ENCODE measurements at regions of chr6 and their contacts with region 1.

Region 1: DNA sequence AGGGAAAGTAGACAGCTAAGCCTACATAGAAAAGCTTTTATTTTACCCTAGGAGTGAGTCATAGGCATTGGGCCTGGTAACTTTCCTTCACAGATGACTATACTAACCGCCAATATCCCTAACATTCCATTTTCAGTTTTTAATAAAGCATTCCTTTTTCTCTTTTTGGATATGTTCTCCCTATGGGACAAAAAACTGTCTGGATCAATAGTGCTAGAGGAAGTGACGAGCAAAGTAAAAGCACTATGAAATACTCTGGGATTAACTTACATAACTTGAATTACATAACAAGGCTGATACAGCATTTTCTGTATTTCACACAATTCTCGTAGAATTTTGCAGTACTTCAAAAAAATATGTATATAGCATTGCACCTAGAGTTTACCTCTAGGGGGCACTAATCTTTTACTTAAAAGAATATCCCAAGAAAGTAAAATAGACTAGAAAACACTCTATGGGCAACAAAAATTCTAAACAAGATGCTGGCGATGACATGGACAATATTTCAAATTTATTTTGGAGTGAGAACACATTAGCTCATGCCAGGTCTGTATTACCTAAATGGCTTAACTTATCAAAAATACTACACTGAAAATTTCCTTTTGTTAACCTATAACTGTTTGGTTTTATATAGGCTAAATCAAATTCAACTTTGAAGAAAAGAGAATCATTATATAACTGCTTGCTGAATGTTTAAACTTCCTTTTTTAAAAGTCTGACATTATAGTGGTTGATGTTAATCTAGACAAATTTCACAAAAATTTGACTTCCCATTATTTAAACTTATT is 66.3 kb upstream of the DST start:
- DNase-seq: peak; percentile 59
- H3K4me3 Mint-ChIP-seq: peak overlapping the region; percentile 45
- H3K27ac Mint-ChIP-seq: peak overlapping the region; percentile 53
- H3K4me1 Mint-ChIP-seq: peaks cover 31% of the 10 kb centered on the region
- H3K27me3 Mint-ChIP-seq: no peaks in the 10 kb centered on the region
- CTCF ChIP-seq: peak; percentile 24

Region 2: DNA sequence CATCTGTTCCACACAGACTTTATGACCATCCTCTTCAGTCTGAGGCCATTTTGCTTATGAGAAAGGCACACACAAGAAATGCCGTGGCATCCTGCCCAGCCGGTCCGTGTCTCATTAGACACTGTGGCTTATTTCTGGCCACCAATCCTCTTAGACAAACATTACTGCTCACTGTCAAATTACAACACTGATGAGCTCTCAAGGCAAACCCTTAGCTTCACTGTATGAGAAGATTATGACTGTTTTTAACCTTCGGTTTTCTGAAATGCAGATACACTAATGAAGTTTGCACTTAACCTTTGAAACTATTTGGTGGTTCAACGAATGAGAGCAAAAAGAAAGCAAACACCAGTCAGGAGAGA is 15.8 kb before region 1 on chr6:
- CTCF ChIA-PET with region 1: interaction called, 15 read pairs
- POLR2A ChIA-PET with region 1: interaction called, 20 read pairs
- intact Hi-C with region 1: no loop called
- DNase-seq: peak; percentile 91
- H3K4me3 Mint-ChIP-seq: peak overlapping the region; percentile 77
- H3K27ac Mint-ChIP-seq: peak overlapping the region; percentile 97
- H3K4me1 Mint-ChIP-seq: peaks cover 51% of the 10 kb centered on the region
- H3K27me3 Mint-ChIP-seq: no peaks in the 10 kb centered on the region
- CTCF ChIP-seq: no peak

Region 3: DNA sequence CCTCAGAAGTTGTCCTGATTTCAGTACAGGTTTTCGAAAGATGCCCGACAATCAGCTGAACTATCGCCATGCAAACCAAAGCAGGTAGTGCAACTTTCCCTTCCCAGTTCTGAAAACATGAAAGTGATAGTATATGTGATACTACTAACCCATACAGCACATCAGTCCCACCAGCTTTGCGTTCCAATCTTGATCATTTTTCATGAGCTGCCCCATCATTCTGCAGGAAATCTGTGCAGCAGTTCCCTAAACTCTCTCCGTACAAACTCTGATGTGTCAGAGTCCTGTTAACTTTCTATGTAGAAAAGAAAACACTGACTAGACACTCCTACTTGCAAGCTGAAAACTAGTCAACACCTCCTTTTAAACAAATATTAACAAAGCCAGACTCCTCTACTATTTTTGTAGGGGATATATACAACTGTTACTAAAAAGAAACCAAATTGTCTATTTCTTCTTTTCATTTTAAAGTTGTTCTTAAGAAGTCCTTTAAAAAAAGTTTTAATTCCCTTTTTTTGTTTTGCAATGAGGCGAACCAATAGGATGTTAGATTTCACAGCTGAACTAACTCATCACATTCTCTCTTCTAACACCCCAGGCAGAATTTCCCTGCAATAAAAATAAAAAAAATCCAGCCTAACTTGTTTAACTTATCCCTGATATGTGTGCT is 33.3 kb after region 1 on chr6:
- CTCF ChIA-PET with region 1: interaction called, 14 read pairs
- POLR2A ChIA-PET with region 1: interaction called, 95 read pairs
- intact Hi-C with region 1: no loop called
- DNase-seq: no peak
- H3K4me3 Mint-ChIP-seq: peak overlapping the region; percentile 83
- H3K27ac Mint-ChIP-seq: peak overlapping the region; percentile 94
- H3K4me1 Mint-ChIP-seq: peaks cover 59% of the 10 kb centered on the region
- H3K27me3 Mint-ChIP-seq: no peaks in the 10 kb centered on the region
- CTCF ChIP-seq: no peak

Region 4: GRCh38 chr6:56764081-56764566 is 55.1 kb after region 1 on chr6:
- CTCF ChIA-PET with region 1: interaction called, 404 read pairs
- POLR2A ChIA-PET with region 1: interaction called, 192 read pairs
- intact Hi-C with region 1: no loop called
- DNase-seq: peak; percentile 59
- H3K4me3 Mint-ChIP-seq: no peak overlapping the region
- H3K27ac Mint-ChIP-seq: no peak overlapping the region
- H3K4me1 Mint-ChIP-seq: peaks cover 23% of the 10 kb centered on the region
- H3K27me3 Mint-ChIP-seq: no peaks in the 10 kb centered on the region
- CTCF ChIP-seq: peak; percentile 49

Region 5: DNA sequence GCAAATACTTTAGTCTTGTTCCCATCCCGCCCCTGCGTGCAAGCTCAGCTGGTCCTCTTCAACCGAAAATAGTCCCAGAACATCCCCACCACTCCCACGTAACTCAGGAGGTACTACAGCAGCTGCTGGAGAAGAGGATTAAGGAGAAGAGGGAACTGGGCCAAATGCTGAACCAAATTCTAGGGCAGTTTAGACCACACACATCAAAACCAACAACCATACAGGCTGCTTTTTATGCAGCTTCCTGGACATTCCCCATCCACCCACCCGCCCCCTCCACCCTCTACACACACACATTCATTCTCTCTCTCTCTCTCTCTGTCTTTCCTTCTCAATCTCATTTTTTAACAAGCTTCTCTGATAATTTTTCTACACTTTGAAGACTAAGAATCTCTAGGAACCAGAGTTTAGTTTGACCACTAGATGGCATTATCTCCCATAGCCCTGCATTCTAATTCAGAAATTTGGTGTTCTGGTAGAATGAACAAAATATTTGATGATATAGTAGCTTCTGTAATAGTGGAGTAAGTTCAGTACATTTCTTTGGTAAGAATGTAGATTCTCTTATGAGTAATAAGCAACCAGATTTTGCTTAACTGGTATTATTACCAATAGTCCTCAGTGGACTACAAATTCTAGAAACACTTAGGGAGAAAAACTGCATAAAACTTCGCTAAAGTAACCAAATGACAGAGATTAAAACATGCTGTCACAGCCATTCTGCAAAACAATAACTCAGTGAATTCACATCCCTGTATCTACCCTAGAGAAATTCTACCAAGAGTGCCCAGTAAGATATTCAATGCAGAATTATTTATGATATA is 193.8 kb after region 1 on chr6:
- CTCF ChIA-PET with region 1: interaction called, 8 read pairs
- POLR2A ChIA-PET with region 1: no interaction called
- intact Hi-C with region 1: loop called (anchors 5 kb)
- DNase-seq: peak; percentile 46
- H3K4me3 Mint-ChIP-seq: no peak overlapping the region
- H3K27ac Mint-ChIP-seq: no peak overlapping the region
- H3K4me1 Mint-ChIP-seq: peaks cover 16% of the 10 kb centered on the region
- H3K27me3 Mint-ChIP-seq: no peaks in the 10 kb centered on the region
- CTCF ChIP-seq: peak; percentile 58